Ascending aorta (tissue), 2 donors: ENCODE measurements at regions of chr7 and their contacts with region 1.

Region 1: DNA sequence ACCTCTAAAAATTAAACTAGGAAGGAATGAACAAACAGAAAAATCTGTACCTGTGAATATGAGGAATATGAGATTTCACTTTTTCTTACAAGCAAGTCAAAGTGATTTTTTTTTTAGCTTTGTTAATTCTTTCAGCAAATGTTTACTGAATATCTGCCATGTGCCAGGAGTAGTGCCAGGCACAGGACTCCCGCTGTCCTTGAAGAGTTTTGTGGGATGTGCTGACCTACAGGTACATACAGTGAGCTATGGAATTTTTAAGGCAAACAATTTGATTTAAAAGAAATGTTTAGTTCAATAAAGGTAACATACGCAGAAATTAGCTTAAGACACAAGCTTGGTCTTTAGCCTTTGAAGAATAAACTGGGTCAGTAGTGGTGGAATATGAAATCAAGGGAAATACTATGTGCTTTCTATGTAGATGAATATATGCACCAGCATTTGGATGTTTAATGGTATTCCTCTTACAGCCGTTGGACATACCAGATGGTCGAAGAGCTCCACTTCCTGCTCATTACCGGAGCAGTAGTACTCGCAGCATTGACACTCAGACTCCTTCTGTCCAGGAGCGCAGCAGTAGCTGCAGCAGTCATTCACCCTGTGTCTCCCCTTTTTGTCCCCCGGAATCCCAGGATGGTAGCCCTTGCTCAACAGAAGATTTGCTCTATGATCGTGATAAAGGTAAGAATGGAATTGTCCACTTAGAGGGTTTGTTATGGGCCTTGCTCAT is 102.0 kb downstream of the GLCCI1 start:
- DNase-seq: no peak
- H3K4me3 ChIP-seq: no peak overlapping the region
- H3K27ac ChIP-seq: no peak overlapping the region
- H3K4me1 ChIP-seq: peaks cover 4 to 9% of the 10 kb centered on the region in 2 donors
- H3K27me3 ChIP-seq: no peaks in the 10 kb centered on the region
- CTCF ChIP-seq: no peak

Region 2: GRCh38 chr7:8022628-8023027 is 48.0 kb before region 1 on chr7:
- intact Hi-C with region 1: loop called (anchors 10 kb)
- DNase-seq: no peak
- H3K4me3 ChIP-seq: no peak overlapping the region
- H3K27ac ChIP-seq: no peak overlapping the region
- H3K4me1 ChIP-seq: no peaks in the 10 kb centered on the region
- H3K27me3 ChIP-seq: no peaks in the 10 kb centered on the region
- CTCF ChIP-seq: no peak

Region 3: GRCh38 chr7:8042796-8043535 is 27.6 kb before region 1 on chr7:
- intact Hi-C with region 1: no loop called
- DNase-seq: no peak
- H3K4me3 ChIP-seq: no peak overlapping the region
- H3K27ac ChIP-seq: no peak overlapping the region
- H3K4me1 ChIP-seq: no peaks in the 10 kb centered on the region
- H3K27me3 ChIP-seq: no peaks in the 10 kb centered on the region
- CTCF ChIP-seq: no peak